Calu3 (cell line): ENCODE measurements at regions of chr15 and their contacts with region 1.

Region 1: DNA sequence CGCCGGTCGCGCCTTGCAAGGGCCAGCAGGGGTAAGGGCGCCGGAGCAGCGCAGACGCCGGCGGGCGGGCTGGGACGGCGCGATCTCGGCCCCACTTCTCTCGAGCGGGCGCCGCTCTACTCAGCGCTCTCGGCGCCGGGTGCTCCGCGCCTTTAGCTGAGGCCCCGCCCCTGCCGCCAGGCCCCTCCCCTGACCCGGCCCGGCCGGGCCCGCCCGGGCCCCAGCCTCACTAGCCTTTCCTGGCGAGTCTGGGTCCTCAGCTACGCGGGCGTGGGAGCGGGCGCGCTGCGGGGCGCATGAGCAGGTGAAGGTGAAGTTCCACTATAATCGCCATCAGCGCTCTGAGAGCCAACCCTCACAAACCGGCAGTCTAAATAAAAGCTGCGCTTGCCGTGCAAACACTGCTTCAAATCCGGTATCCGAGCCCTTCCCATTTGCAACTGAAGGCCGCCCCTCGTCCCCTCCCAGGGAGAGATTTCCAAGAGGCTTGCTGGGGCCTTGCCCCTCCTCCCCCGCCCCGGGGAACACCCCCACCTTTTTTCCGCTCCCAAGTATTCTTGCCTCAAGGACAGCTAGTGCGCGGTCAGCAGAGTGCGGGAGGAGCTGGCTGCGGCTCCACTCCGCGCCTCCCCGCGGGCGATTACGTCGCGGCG is at the start of gene RPP25:
- DNase-seq: peak; percentile 85
- H3K4me3 Mint-ChIP-seq: peak within 1 kb of the TSS; percentile 71
- H3K27ac Mint-ChIP-seq: no peak within 1 kb of the TSS
- H3K4me1 Mint-ChIP-seq: peaks cover 27% of the 10 kb centered on the region
- H3K27me3 Mint-ChIP-seq: peaks cover 40% of the 10 kb centered on the region
- CTCF ChIP-seq: no peak
- total RNA-seq, gene RPP25: 14.9 and 19.2 TPM in 2 replicates

Region 2: DNA sequence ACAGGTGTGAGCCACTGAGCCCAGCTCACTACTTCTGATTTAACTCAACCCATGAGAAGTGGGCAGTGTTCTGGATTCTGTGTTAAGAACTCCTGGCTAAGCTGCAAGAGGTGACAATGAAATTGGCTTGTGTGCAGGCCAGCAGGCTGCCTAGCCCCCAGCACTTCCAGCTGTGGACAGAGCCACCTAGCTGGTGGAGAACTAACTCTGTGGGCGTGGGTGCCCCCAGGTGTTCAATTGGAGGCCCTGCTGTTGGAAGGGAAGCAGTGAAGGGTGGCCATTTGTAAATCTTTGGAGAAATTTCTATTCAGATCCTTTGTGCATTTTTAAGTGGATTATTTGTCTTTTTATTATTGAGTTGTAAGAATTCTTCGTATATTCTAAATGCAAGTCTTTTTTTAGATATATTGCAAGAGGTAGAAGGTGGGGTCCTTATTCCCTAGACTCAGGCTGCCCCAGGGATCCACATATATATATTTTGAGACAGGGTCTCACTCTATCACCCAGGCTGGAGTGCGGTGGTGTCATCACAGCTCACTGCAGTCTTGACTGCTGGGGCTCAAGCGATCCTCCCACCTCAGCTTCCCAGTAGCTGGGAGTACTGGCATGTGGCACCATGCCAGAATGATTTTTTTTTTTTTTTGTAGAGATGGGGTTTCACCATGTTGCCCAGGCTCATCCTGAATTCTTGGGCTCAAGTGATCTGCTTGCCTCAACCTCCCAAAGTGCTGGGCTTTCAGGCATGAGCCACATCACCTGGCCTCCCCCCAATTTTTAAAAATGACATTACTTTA is 31.4 kb after region 1 on chr15:
- CTCF ChIA-PET with region 1: interaction called, 10 read pairs
- intact Hi-C with region 1: no loop called
- DNase-seq: peak; percentile 80
- H3K4me3 Mint-ChIP-seq: no peak overlapping the region
- H3K27ac Mint-ChIP-seq: no peak overlapping the region
- H3K4me1 Mint-ChIP-seq: peaks cover 15% of the 10 kb centered on the region
- H3K27me3 Mint-ChIP-seq: peaks cover 58% of the 10 kb centered on the region
- CTCF ChIP-seq: peak; percentile 57